Aorta (tissue), 5 donors: ENCODE measurements at regions of chr20 and their contacts with region 1.

Region 1: DNA sequence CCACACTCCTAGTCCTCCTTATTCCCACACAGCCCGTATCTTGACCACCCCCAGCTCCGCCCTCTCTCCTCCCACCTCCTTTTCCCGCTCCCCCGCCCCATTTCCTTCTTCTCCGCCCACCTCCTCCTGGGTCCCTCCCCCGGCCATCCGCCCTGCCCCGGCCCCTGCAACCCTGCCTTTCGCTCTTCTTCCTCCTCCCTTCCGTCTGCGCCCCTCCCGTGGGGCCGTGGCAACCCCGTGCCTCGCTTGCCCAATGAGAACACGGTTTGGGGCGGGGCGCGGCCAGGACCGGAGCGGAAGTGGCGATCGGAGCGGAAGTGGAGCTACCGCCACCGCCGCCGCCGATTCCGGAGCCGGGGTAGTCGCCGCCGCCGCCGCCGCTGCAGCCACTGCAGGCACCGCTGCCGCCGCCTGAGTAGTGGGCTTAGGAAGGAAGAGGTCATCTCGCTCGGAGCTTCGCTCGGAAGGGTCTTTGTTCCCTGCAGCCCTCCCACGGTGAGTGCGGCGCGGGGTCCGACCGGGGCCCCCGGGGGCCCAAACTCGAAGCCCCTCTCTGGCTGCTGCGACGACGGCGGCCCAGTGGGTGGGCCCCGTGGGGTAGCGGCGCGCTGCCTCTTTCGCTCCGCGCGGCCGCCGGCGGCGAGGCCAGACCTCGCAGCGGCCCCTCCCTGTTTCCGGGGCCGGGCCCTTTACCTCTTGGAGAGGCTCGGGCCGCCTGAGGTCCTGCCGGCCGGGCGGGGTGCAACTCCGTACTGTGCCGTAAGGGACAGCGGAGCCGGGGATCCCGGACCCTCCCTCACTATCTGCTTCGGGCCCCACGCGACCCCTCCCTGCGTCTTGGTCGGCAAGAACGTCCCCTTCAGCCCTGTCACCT is at the start of gene YWHAB:
- DNase-seq: peak; percentile 100
- ATAC-seq: peak; percentile 99
- H3K4me3 ChIP-seq: peak within 1 kb of the TSS; percentile 63 to 79
- H3K27ac ChIP-seq: peak within 1 kb of the TSS; percentile 52 to 62
- H3K4me1 ChIP-seq: peaks cover 0 to 2% of the 10 kb centered on the region in 2 donors
- H3K27me3 ChIP-seq: no peaks in the 10 kb centered on the region
- total RNA-seq, gene YWHAB: 166 to 167 TPM

Region 2: DNA sequence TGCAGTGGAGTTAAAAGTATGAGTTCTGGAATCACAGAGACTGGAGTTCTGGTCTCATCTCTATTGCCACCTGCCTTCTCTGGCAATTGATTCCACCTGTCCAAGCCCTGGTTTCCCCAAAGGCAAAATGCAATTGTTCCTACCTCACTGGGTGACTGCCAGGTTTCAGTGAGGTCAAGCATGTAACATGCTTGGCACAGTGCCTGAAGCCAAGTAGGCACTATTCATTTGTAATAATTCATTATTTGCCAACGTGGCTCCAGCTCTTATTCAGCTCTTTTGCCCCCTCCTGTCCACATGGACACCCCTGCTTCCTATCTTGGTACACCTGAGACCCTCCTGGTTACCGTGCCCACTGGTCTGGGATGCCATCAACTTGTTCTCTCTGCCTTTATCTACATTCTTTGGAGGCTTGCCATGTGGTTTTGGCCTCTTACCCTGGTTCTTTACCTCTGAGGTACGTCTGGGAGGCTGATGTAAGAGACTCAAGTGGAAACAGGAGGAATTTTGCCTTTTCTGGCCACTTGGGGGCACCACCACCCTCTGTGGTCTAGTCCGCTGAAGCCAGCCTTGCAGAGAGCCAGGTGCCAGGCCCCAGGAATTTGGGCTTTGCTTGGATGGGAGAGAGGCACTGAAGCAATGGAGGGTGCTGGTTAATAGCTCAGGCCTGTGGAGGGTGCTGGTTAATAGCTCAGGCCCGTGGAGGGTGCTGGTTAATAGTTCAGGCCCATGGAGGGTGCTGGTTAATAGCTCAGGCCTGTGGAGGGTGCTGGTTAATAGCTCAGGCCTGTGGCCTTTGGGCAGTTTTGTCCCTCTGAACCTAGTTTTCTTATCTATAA is 138.2 kb before region 1 on chr20:
- intact Hi-C with region 1: loop called in 1 of 2 experiments (anchors 5 kb)
- DNase-seq: peak; percentile 85 to 92
- ATAC-seq: peak; percentile 73
- H3K4me3 ChIP-seq: peak overlapping the region in 1 of 2 donors; percentile 18
- H3K27ac ChIP-seq: peak overlapping the region in 1 of 2 donors; percentile 18
- H3K4me1 ChIP-seq: peaks cover 0 to 5% of the 10 kb centered on the region in 2 donors
- H3K27me3 ChIP-seq: no peaks in the 10 kb centered on the region

Region 3: DNA sequence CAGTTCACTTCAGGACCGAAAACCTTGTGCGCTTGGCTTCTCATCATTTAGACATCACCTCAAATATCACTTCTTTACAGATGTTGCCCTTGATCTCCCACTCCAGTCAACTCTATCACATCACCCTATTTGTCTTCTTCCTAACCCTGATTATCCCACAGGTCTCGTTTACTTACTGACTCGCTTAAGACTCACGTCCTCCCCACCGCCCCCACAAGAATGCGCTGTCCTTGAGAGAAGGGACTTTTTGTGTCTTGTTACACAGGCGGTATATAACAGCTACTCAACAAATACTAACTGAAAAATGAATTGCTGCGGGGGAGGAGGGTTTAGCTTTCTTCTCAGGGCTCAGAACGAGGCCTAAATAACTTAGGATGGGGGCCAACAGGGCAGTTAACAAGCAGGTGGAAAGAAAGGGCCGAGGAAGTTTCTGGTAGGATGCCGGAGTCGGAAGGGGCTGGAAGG is 74.0 kb after region 1 on chr20:
- intact Hi-C with region 1: loop called in 1 of 2 experiments (anchors 5 kb)
- DNase-seq: peak in 1 of 2 donors; percentile 81
- ATAC-seq: peak; percentile 45
- H3K4me3 ChIP-seq: peak overlapping the region; percentile 43 to 49
- H3K27ac ChIP-seq: no peak overlapping the region
- H3K4me1 ChIP-seq: no peaks in the 10 kb centered on the region
- H3K27me3 ChIP-seq: no peaks in the 10 kb centered on the region

Region 4: DNA sequence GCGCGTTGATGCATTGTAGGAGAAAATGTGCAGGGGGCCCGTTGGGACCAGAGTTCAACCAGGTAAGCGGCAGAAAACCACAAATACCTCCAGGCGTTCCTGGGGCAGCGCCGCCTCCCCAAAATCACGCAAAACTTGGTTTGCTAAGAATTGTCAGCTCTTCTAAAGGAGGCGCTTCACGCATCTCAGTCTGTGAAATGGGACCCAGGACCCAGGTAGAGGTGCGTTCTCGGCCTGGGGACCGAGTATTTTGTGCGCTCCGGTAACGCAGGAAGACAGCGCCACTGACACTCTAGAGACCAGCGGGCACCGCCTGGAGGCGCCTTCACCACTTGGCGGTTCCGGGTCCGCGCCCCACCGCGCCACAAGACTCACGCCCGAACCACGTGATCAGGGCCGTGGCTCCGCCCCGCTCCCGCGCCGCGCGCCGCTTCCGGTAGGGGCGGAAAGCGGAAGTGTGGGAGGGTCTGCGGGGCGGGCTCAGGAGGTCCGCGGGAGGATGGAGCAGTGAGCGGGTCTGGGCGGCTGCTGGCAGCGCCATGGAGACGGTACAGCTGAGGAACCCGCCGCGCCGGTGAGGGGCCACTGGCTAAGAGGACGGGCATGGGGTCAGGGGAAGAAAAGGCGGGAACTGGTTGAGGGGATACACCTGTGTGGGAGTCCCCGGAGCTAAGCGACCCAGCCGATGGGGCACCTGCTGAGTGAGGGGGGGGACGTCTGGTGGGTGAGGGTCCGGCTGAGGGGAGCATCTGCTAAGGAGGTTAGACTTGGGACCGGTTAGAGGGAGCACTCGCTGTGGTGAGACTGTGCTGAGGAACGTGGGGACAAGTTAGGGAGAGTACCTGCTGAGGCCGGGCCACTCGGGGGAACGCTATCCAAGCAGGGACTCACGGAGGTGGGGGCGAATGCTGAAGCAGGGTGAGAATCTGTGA is 80.7 kb after region 1 on chr20 and contains the start of gene STK4:
- intact Hi-C with region 1: loop called in 1 of 2 experiments (anchors 5 kb)
- DNase-seq: peak; percentile 96 to 98
- ATAC-seq: peak; percentile 99
- H3K4me3 ChIP-seq: peak within 1 kb of the TSS; percentile 45 to 51
- H3K27ac ChIP-seq: peak within 1 kb of the TSS in 1 of 2 donors; percentile 83
- H3K4me1 ChIP-seq: peaks cover 0 to 2% of the 10 kb centered on the region in 2 donors
- H3K27me3 ChIP-seq: no peaks in the 10 kb centered on the region
- total RNA-seq, gene STK4: 40.1 to 41.0 TPM

Region 5: GRCh38 chr20:45436732-45437391 is 551.2 kb after region 1 on chr20:
- intact Hi-C with region 1: loop called in 1 of 2 experiments (anchors 10 kb)
- DNase-seq: peak; percentile 93 to 97
- ATAC-seq: peak; percentile 97
- H3K4me3 ChIP-seq: peak overlapping the region; percentile 46 to 55
- H3K27ac ChIP-seq: peak overlapping the region in 1 of 2 donors; percentile 64
- H3K4me1 ChIP-seq: no peaks in the 10 kb centered on the region
- H3K27me3 ChIP-seq: no peaks in the 10 kb centered on the region